ENCODE measurements at regions of chr1 and their contacts with region 1.

Region 1: DNA sequence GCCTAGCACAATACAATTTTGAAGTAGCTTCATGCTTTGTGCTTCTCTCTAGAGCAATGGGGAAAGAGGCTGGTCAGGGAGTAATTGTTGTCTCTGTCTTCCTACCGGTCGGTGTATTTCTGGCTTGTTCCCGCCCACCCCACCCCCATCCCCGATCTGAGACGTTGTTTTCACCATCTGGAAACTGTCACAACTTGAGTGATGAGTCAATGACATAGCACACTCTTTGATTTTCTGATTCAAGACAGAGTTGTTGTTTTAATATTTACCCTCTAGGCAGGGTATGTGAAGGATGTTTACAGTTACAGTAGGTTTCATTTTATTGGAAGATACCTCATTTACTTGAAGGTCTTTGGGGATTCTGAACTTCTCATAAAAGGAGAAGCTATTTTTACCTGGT is 7.0 kb downstream of the IL12RB2 start:
- DNase-seq: no peak
- ATAC-seq: peak; percentile 41
- H3K4me3 ChIP-seq: no peak overlapping the region
- H3K4me3 Mint-ChIP-seq: peak overlapping the region in 4 of 10 donors; percentile 9 to 84 (median 34)
- H3K27ac ChIP-seq: no peak overlapping the region
- H3K27ac Mint-ChIP-seq: peak overlapping the region in 1 of 9 donors; percentile 92
- H3K4me1 ChIP-seq: no peaks in the 10 kb centered on the region
- H3K4me1 Mint-ChIP-seq: peaks cover 0 to 51% (median 0%) of the 10 kb centered on the region in 7 donors
- H3K27me3 ChIP-seq: no peaks in the 10 kb centered on the region
- H3K27me3 Mint-ChIP-seq: peaks cover 0 to 2% (median 0%) of the 10 kb centered on the region in 5 donors

Region 2: GRCh38 chr1:67332653-67333529 is 18.2 kb after region 1 on chr1:
- CTCF ChIA-PET with region 1: interaction called, 3 read pairs
- POLR2A ChIA-PET with region 1: interaction called, 4 read pairs
- intact Hi-C with region 1: loop called in 1 of 2 experiments (anchors 1 kb)
- DNase-seq: peak in 5 of 9 donors; percentile 16 to 41 (median 33)
- ATAC-seq: peak; percentile 84
- H3K4me3 ChIP-seq: no peak overlapping the region
- H3K4me3 Mint-ChIP-seq: peak overlapping the region in 6 of 10 donors; percentile 0 to 51 (median 24)
- H3K27ac ChIP-seq: no peak overlapping the region
- H3K27ac Mint-ChIP-seq: peak overlapping the region; percentile 3 to 87 (median 23)
- H3K4me1 ChIP-seq: peaks cover 17 to 34% of the 10 kb centered on the region in 2 donors
- H3K4me1 Mint-ChIP-seq: peaks cover 19 to 73% (median 39%) of the 10 kb centered on the region in 7 donors
- H3K27me3 ChIP-seq: no peaks in the 10 kb centered on the region
- H3K27me3 Mint-ChIP-seq: no peaks in the 10 kb centered on the region

Region 3: DNA sequence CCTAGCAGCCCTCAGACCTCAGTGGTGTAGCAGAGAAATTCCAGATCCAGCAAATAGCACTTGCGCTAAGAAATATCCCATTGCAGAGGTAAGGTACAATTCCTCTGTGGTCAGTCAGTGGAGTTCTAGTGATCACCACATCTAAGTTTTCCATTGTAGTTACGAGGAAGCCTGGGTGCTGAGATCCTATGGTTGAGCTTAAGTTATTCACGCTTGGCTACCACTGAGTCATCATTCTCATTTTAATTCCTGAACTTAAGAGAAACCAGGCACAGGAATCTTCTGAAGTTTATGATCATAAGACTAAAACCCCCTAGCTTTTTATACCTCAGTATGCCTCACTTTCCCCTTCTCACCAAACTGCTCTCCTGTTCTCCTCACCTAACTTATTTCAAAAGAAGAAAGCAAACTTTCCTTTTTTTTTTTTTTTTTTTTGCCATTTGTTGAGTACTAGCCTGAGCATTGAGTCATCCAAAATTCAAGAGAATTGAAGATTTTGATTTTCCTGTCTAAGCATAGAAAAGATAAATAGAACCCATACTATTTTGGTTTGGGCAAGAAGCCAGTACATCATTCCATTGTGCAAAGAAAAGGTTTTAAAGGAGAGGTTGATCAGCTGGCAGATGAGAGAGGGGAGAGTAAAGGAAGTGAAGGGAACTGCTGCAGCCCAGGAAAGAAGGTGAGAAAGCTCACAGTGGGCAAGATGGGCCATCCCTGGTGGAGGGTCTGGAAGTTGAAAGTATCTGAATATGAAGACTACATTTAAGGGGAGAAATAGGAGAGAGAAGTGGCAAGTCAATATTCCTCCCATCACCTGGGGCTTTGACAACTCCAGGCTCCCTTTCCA is 75.6 kb after region 1 on chr1:
- CTCF ChIA-PET with region 1: no interaction called
- POLR2A ChIA-PET with region 1: no interaction called
- intact Hi-C with region 1: no loop called
- DNase-seq: no peak
- ATAC-seq: no peak
- H3K4me3 ChIP-seq: no peak overlapping the region
- H3K4me3 Mint-ChIP-seq: no peak overlapping the region
- H3K27ac ChIP-seq: no peak overlapping the region
- H3K27ac Mint-ChIP-seq: peak overlapping the region in 2 of 9 donors; percentile 4 to 55
- H3K4me1 ChIP-seq: no peaks in the 10 kb centered on the region
- H3K4me1 Mint-ChIP-seq: peaks cover 0 to 9% (median 0%) of the 10 kb centered on the region in 7 donors
- H3K27me3 ChIP-seq: no peaks in the 10 kb centered on the region
- H3K27me3 Mint-ChIP-seq: no peaks in the 10 kb centered on the region

Measured in naive thymus-derived CD4-positive, alpha-beta T cell (primary cell).